Heart right ventricle (tissue), 16 donors: ENCODE measurements at regions of chr14 and their contacts with region 1.

Region 1: GRCh38 chr14:33704441-33704840 is 246.4 kb downstream of the EGLN3 start:
- DNase-seq: no peak
- ATAC-seq: no peak
- H3K4me3 ChIP-seq: no peak overlapping the region
- H3K27ac ChIP-seq: no peak overlapping the region
- H3K4me1 ChIP-seq: no peaks in the 10 kb centered on the region
- H3K27me3 ChIP-seq: peaks cover 0 to 3% (median 0%) of the 10 kb centered on the region in 7 donors
- CTCF ChIP-seq: no peak

Region 2: GRCh38 chr14:33465846-33466635 is 238.4 kb before region 1 on chr14:
- intact Hi-C with region 1: no loop called
- DNase-seq: no peak
- ATAC-seq: no peak
- H3K4me3 ChIP-seq: no peak overlapping the region
- H3K27ac ChIP-seq: no peak overlapping the region
- H3K4me1 ChIP-seq: no peaks in the 10 kb centered on the region
- H3K27me3 ChIP-seq: no peaks in the 10 kb centered on the region
- CTCF ChIP-seq: no peak

Region 3: DNA sequence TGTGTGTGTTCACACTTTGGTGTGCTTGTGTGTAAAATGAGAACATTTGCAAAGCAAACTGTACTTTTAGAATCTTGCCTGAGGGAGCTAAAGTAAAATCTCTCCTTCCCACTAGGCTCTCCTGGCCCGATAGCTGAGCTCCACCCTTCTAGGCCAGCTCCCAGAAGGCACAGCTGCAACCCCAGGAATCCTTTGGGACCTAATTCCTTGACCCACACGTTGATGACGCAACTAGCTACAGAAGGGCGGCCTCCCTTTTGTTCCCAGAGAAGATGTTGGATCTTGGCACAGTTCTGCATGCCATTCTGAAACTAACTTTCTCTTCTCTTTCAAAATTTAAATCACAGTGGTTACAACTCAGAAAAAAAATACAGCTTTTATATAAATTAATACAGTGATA is 21.7 kb before region 1 on chr14:
- intact Hi-C with region 1: loop called in 1 of 10 experiments (anchors 2 kb)
- DNase-seq: peak; percentile 56 to 66
- ATAC-seq: peak in 7 of 8 donors; percentile 86 to 98 (median 95)
- H3K4me3 ChIP-seq: no peak overlapping the region
- H3K27ac ChIP-seq: peak overlapping the region in 2 of 10 donors; percentile 44 to 62
- H3K4me1 ChIP-seq: peaks cover 0 to 14% (median 9%) of the 10 kb centered on the region in 9 donors
- H3K27me3 ChIP-seq: no peaks in the 10 kb centered on the region
- CTCF ChIP-seq: no peak

Region 4: DNA sequence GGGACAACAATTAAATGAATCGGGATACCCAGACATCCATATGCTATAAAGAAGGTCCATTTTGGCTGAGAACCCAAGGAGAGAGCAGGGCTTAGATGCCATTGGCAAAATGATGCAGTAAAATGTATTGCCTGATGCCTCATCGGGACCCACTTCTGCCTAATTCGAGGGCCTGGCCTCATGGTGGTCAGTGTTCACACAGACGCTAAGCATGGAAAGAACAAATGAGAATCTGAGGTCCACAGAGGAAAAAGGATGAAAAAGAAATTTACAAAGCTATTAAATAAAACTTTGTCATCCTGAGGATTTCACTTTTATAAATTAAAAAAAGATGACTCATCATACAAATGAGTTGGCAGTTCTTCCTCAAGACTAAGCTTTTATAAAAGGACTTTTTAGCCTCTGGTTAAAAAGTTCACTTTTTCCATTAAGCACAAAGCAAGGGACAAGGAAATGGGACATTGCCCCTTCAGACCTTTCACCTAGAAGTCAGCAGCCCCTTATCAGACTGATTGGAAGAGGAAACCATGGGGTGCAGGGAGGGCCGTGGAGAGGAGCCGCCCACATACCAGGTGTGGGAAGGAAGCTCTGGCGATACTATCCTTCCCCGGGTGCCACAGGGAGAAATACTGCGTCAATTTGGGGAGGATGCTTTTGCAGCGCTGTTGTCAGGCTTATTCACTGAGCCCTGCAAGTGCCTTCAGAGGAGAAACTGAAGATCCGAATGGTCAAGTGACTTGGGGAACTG is 70.5 kb after region 1 on chr14:
- intact Hi-C with region 1: loop called in 1 of 10 experiments (anchors 5 kb)
- DNase-seq: no peak
- ATAC-seq: no peak
- H3K4me3 ChIP-seq: no peak overlapping the region
- H3K27ac ChIP-seq: no peak overlapping the region
- H3K4me1 ChIP-seq: peaks cover 0 to 1% (median 0%) of the 10 kb centered on the region in 9 donors
- H3K27me3 ChIP-seq: no peaks in the 10 kb centered on the region
- CTCF ChIP-seq: no peak